Motor neuron (in vitro differentiated cells): ENCODE measurements at regions of chr1 and their contacts with region 1.

Region 1: GRCh38 chr1:201559679-201560162 is 20.8 kb downstream of the NAV1 start:
- ATAC-seq: peak; percentile 50 to 96 (median 96)
- H3K4me3 ChIP-seq: no peak overlapping the region
- H3K27ac ChIP-seq: no peak overlapping the region
- H3K4me1 ChIP-seq: peaks cover 6 to 7% of the 10 kb centered on the region in 2 donors

Region 2: GRCh38 chr1:201676197-201676596 is 116.5 kb after region 1 on chr1:
- in situ Hi-C with region 1: no loop called
- ATAC-seq: peak in 7 of 8 experiments; percentile 17 to 70 (median 32)
- H3K4me3 ChIP-seq: no peak overlapping the region
- H3K27ac ChIP-seq: peak overlapping the region in 1 of 2 donors; percentile 8
- H3K4me1 ChIP-seq: peaks cover 58 to 62% of the 10 kb centered on the region in 2 donors

Region 3: GRCh38 chr1:201696217-201696761 is 136.6 kb after region 1 on chr1:
- in situ Hi-C with region 1: loop called in 8 of 9 experiments (anchors 10 to 25 kb)
- ATAC-seq: peak in 3 of 8 experiments; percentile 83 to 88 (median 86)
- H3K4me3 ChIP-seq: no peak overlapping the region
- H3K27ac ChIP-seq: peak overlapping the region; percentile 78 to 89
- H3K4me1 ChIP-seq: peaks cover 65 to 68% of the 10 kb centered on the region in 2 donors

Region 4: DNA sequence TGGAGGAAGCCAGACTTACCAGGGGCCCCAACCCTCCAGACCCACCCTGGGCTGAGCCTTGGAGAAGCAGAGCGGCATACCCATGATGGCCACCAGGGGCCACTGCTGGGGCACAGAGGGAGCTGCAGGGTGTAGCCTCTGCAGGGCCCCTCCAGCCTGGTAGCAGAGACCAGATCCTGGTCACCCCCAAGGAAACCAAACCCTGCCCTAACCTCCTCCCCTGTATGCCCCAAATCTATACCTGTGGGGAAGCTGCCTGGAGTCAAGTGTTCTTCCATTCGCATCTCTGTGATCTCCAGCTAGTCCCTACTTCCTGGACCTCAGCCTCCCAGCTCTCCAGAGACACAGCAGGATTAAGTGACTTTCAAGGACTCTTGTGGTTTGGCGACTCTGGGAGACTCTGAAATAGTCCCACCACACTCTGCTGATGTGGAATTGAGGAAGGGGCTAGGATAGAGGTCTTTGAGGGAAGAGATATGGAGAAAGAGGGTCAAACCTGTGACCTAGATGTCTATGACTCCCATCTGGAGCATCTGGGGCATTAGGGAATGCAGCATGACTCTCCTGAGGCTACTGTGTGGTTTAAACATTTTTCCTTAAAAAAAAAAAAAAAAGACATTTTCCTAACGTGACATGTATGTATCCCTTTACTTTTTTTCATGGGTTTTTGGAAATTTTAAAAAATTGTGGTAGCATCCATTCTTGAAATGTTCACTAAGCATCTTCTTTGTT is 150.0 kb after region 1 on chr1:
- in situ Hi-C with region 1: loop called in 8 of 9 experiments (anchors 5 to 25 kb)
- ATAC-seq: peak; percentile 33 to 88 (median 73)
- H3K4me3 ChIP-seq: no peak overlapping the region
- H3K27ac ChIP-seq: no peak overlapping the region
- H3K4me1 ChIP-seq: peaks cover 7 to 16% of the 10 kb centered on the region in 2 donors

Region 5: GRCh38 chr1:201783572-201783971 is 223.9 kb after region 1 on chr1:
- in situ Hi-C with region 1: loop called in 5 of 9 experiments (anchors 10 to 25 kb)
- ATAC-seq: peak in 1 of 8 experiments; percentile 41
- H3K4me3 ChIP-seq: no peak overlapping the region
- H3K27ac ChIP-seq: no peak overlapping the region
- H3K4me1 ChIP-seq: no peaks in the 10 kb centered on the region

Region 6: DNA sequence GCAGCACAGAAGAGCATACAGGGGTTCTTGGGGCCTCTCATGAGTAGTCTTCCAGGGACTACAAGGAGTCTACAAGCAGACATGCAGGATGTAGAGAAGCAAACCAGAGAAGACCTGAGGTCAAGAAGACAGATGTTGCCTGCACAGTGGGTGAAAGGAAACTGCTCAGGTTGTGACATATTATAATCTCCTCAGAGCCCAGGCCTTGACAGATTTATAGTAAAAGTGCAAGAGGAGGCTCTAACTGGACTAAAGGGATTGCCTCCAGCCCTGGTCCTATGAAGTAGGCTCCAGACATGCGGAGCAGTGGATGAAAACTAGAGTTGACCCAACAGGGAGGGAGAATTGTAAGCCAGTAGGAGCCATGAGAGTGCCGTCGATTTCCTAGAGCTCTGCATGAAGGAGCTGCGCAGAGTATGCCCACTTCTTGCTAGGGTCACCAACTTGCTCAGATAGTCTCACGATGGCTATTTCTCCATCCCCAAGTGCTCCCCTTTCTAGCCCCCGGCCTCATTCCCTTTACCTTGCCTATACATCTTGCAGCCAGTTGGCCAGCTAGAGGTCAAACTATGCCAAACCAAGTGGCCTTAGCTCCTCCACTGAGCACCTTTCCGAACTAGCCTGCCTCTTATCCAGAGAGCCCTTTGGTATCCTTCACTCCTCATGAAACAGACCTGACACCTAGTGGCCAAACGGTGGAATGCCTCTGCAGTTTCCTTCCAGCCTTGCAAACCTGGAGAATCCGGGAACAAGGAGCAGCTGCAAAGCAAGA is 233.0 kb after region 1 on chr1:
- in situ Hi-C with region 1: loop called in 6 of 9 experiments (anchors 10 to 25 kb)
- ATAC-seq: peak; percentile 79 to 98 (median 96)
- H3K4me3 ChIP-seq: no peak overlapping the region
- H3K27ac ChIP-seq: no peak overlapping the region
- H3K4me1 ChIP-seq: peaks cover 6 to 9% of the 10 kb centered on the region in 2 donors